IMR-90 (cell line): ENCODE measurements at regions of chr6 and their contacts with region 1.

Region 1: DNA sequence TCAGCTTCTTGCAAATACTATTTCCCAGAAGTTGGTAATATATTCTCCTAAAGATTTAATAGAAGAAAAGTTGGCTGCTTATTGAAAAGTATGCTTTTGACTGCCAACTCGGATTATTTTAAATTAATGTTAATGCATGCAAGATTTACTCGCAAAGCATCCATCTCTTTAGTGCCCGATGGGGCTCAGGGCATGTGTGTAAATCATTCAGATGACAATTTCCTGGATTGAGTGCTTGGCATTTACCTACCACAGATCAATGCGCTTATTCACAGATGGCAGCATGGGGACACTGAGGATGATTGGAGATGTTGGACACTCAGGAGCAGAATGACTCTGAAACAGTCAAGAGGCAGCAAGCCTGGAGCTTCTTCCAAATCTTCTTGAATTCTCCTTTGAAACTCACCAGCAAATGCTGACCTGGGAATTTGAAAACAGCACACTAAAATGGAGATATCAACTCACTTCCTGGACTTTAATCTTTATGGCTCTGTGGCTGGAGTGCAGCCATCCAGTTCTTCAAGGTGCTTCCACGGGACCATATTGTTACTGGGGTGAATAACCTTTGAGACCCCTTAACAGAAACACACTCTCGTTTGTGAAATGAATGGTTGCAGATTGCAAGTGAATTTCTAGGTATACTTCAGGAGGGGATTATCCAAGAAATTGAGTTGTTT is 34.1 kb upstream of the TIAM2 start:
- DNase-seq: no peak
- ATAC-seq: no peak
- H3K4me3 ChIP-seq: no peak overlapping the region
- H3K27ac ChIP-seq: no peak overlapping the region
- H3K4me1 ChIP-seq: peaks cover 4% of the 10 kb centered on the region
- H3K27me3 ChIP-seq: no peaks in the 10 kb centered on the region
- CTCF ChIP-seq: no peak
- POLR2A ChIP-seq: no peak
- RAD21 ChIP-seq: no peak

Region 2: GRCh38 chr6:154937306-154938220 is 23.4 kb before region 1 on chr6:
- CTCF ChIA-PET with region 1: interaction called, 6 read pairs
- POLR2A ChIA-PET with region 1: no interaction called
- dilution Hi-C with region 1: no loop called
- in situ Hi-C with region 1: no loop called
- intact Hi-C with region 1: loop called (anchors 1 kb)
- DNase-seq: peak; percentile 77
- ATAC-seq: peak; percentile 93
- H3K4me3 ChIP-seq: no peak overlapping the region
- H3K27ac ChIP-seq: peak overlapping the region; percentile 86; the same call in 1 of the 2 replicates
- H3K4me1 ChIP-seq: peaks cover 18% of the 10 kb centered on the region
- H3K27me3 ChIP-seq: no peaks in the 10 kb centered on the region
- CTCF ChIP-seq: 0 out of 2 replicates have a peak, but pooled peaks have one; percentile 1
- POLR2A ChIP-seq: no peak
- RAD21 ChIP-seq: no peak